Sciatic nerve (tissue), 2 donors: ENCODE measurements at regions of chr11 and their contacts with region 1.

Region 1: GRCh38 chr11:128630367-128631230 is 43.2 kb upstream of the ETS1 start:
- DNase-seq: peak; percentile 97
- ATAC-seq: peak; percentile 96

Region 2: DNA sequence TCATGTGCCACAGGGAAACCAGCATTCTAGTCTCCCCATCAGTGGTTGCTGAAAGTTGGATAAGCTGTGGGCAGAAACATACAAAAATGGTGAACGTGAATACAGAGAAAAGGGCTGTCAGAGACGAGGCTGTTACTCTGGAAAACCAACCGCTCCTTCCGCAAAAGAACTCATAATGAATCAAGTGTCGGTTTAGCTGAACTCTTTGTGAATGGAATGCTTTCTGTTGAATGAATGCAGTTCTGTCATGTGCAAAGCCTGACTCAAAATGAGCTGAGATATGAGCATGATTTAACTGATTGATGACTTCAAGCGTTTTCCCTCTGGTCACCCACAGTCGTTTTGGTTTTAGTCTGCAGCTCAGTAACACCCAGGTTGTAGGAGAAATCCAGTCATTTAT is 341.6 kb before region 1 on chr11:
- intact Hi-C with region 1: loop called (anchors 5 kb)
- DNase-seq: no peak
- ATAC-seq: no peak

Region 3: GRCh38 chr11:128506999-128507611 is 123.5 kb before region 1 on chr11:
- intact Hi-C with region 1: no loop called
- DNase-seq: peak; percentile 79
- ATAC-seq: peak; percentile 86